Mammary epithelial cell (primary cell): ENCODE measurements at regions of chr6 and their contacts with region 1.

Region 1: GRCh38 chr6:133191323-133191722 is 49.8 kb upstream of the EYA4 start:
- DNase-seq: no peak
- H3K4me3 ChIP-seq: no peak overlapping the region
- H3K27ac ChIP-seq: no peak overlapping the region
- H3K4me1 ChIP-seq: no peaks in the 10 kb centered on the region
- H3K27me3 ChIP-seq: peaks cover 12% of the 10 kb centered on the region
- CTCF ChIP-seq: no peak

Region 2: GRCh38 chr6:133309579-133309978 is 118.3 kb after region 1 on chr6:
- CTCF ChIA-PET with region 1: interaction called, 20 read pairs
- dilution Hi-C with region 1: no loop called
- in situ Hi-C with region 1: no loop called
- intact Hi-C with region 1: no loop called
- DNase-seq: no peak
- H3K4me3 ChIP-seq: no peak overlapping the region
- H3K27ac ChIP-seq: no peak overlapping the region
- H3K4me1 ChIP-seq: no peaks in the 10 kb centered on the region
- H3K27me3 ChIP-seq: peaks cover 12% of the 10 kb centered on the region
- CTCF ChIP-seq: no peak

Region 3: GRCh38 chr6:133502441-133503259 is 311.3 kb after region 1 on chr6:
- CTCF ChIA-PET with region 1: interaction called, 14 read pairs
- dilution Hi-C with region 1: no loop called
- in situ Hi-C with region 1: no loop called
- intact Hi-C with region 1: no loop called
- DNase-seq: no peak
- H3K4me3 ChIP-seq: no peak overlapping the region
- H3K27ac ChIP-seq: no peak overlapping the region
- H3K4me1 ChIP-seq: no peaks in the 10 kb centered on the region
- H3K27me3 ChIP-seq: peaks cover 4% of the 10 kb centered on the region
- CTCF ChIP-seq: no peak